Calu3 (cell line): ENCODE measurements at regions of chr12 and their contacts with region 1.

Region 1: DNA sequence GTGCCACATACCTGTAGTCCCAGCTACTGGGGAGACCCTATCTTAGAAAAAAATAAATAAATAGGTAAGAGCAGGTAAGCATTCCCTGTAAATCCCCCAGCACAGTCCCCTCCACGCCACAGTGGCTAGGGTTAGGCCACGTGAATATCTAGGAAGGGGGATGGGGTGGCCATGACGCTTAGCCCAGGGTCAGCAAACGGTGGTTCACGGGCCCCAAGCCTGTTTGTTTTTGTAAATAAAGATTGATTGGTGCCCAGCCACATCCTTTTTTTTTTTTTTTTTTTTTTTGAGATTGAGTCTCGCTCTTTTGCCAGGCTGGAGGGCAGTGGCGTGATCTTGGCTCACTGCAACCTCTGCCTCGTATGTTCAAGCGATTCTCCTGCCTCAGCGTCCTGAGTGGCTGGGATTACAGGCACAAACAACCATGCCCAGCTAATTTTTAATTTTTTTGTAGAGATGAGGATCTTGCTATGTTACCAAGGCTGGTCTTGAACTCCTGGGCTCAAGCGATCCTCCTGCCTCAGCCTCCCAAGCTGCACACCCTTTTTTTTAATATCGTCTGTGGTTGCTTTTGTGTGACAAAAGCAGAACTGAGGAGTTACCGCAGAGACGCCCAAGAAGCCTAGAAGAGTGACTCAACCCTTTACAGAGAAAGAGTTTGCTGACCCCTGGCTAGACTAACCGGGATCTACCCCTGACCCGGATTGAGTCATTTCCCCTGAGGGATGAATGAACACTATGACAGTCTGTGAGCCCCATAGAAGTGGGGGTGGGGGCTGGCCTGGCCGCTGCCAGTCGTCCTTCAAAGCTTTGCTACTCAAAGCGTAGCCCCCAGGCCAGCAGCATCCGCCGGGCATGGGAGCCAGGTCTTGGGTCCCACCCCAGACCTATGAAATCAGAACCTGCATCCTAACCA is 113.7 kb upstream of the NCOR2 start:
- DNase-seq: peak; percentile 76
- H3K4me3 Mint-ChIP-seq: no peak overlapping the region
- H3K27ac Mint-ChIP-seq: peak overlapping the region; percentile 31
- H3K4me1 Mint-ChIP-seq: peaks cover 72% of the 10 kb centered on the region
- H3K27me3 Mint-ChIP-seq: no peaks in the 10 kb centered on the region
- CTCF ChIP-seq: no peak

Region 2: DNA sequence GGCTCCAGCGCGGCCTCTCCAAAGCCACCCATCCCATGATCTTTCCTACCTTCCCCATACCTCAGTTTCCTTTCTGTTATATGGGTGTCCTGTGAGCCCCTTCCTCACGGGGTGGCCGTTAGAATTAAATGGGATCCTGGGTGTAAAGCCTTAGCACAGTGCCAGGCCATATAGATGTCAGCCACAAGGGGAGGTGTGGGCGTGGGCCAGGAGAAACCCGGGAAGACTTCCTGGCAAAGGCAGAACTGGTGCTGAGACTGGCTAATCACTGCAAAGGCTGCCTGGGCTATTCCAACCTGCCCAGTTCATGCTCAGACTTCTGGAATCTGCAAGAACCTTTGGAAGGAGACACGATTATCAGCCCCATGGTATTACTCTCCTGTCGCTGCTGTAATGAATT is 102.7 kb before region 1 on chr12:
- CTCF ChIA-PET with region 1: no interaction called
- intact Hi-C with region 1: loop called (anchors 5 kb)
- DNase-seq: no peak
- H3K4me3 Mint-ChIP-seq: no peak overlapping the region
- H3K27ac Mint-ChIP-seq: no peak overlapping the region
- H3K4me1 Mint-ChIP-seq: peaks cover 14% of the 10 kb centered on the region
- H3K27me3 Mint-ChIP-seq: no peaks in the 10 kb centered on the region
- CTCF ChIP-seq: no peak

Region 3: DNA sequence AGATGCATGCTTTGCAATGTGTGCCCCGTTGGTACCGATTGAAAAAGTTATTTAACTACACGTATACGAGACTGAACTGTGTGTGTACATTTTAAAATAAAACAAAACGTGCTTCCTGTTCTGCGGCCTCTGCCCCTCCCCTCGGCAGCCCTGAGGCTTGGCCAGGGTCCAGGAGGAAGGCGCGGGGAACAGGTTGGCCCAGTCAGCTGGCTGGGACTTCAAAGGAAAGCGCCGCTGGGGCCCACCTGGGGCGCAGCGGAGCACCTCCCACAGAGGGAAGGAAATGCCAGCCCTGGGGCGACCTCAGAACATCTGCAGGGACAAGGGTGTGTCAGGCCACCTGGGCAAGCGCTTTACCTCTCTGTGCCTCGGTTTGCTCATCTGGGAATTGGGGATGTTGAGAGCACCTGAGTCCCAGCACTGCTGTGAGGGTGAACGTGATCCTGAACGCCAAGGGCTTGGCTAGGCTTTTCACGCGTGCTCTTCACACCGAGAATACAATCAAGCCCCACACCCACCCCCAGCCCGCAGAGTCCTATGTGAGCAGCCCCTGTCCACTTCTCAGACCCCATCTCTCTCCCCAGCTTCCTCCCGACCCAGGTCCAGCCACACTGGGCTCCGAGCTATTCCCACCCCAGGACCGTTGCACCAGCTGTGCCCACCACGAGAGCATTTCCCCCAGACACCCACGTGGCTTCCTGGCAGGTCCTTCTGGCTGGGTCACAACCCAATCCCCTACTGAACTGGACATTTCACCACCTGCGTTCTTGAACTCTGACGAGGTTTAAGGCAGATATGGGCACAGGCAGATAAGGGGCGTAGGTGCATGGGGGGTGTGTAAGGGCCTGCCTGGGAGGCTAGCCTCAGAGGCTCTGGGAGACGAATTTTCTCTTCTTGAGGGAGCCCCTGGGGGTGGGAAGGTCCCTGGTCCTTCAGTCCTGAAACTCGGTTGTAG is 71.8 kb before region 1 on chr12:
- CTCF ChIA-PET with region 1: no interaction called
- intact Hi-C with region 1: loop called (anchors 5 kb)
- DNase-seq: peak; percentile 99
- H3K4me3 Mint-ChIP-seq: peak overlapping the region; percentile 60
- H3K27ac Mint-ChIP-seq: peak overlapping the region; percentile 79
- H3K4me1 Mint-ChIP-seq: peaks cover 75% of the 10 kb centered on the region
- H3K27me3 Mint-ChIP-seq: no peaks in the 10 kb centered on the region
- CTCF ChIP-seq: no peak

Region 4: DNA sequence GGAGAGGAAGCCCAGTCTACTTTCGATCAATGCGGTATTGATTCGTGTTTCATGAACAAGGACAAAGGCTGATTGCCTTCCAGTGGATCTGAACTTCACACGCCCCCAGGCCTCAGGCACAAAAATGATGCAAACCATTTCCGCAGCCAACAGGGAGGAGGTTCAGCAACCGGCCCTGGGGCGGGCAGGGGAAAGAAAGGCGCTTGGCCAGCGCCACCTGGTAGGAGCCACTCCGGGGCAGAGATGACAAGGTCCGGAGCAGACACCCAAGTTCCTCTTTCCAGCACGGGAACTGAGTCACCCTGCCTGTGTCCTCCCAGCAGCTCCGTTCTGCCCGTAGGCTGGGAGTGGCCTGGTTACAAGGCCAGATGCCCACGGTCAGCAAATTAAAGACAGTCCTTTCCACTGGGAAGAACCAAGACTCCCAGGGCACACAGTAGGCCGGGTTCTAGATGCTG is 46.2 kb after region 1 on chr12:
- CTCF ChIA-PET with region 1: interaction called, 4 read pairs
- intact Hi-C with region 1: loop called (anchors 1 kb)
- DNase-seq: peak; percentile 98
- H3K4me3 Mint-ChIP-seq: no peak overlapping the region
- H3K27ac Mint-ChIP-seq: peak overlapping the region; percentile 60
- H3K4me1 Mint-ChIP-seq: peaks cover 50% of the 10 kb centered on the region
- H3K27me3 Mint-ChIP-seq: no peaks in the 10 kb centered on the region
- CTCF ChIP-seq: no peak